Endothelial cell of umbilical vein (primary cell): ENCODE measurements at regions of chr10 and their contacts with region 1.

Region 1: DNA sequence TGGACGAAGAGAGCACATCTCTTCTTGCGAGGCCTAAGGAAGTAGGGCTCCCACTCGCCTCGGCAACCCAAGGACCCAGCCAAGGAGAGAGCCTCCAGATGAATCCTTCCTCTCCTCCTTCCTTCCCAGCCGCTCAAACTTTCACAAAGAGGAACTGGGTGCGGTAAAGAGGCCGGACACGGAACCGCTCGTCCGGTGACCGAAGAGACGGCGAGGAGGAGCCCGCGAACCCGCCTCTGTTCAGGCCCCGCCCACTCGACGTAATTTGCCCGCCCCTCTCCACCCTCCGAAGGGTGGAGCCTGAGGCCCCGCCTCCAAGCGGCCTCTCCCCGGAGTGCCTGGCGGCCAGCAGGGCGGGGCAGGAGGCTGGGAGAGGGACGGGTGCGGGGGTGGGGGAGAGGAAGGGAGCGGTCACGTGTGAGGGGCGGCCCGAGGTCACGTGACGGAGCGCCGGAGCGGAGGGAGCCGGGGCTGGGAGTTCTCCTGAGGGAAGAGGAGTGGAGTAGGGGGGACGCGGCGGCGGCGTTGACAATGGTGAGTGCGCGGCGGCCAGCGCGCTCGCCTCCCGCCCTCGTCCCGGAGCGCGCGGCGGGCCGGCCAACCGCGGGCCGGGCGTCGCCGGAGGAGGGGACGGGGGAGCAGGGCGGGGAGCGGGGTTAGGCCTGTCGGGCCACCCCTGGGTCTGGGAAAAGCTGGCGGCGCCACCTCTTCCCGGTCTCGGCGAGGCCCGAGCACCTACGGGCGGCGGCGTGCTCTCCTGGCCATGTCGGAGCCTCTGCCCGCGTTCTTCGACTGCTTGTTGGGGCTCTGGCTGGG is at the start of gene VPS26A:
- DNase-seq: peak; percentile 99
- H3K4me3 ChIP-seq: peak within 1 kb of the TSS; percentile 50 to 82 (median 81)
- H3K27ac ChIP-seq: peak within 1 kb of the TSS; percentile 79
- H3K4me1 ChIP-seq: peaks cover 16% of the 10 kb centered on the region
- H3K27me3 ChIP-seq: no peaks in the 10 kb centered on the region
- CTCF ChIP-seq: peak; percentile 35 to 47
- POLR2A ChIP-seq: peak; percentile 83
- total RNA-seq, gene VPS26A: 55.8 and 60.3 TPM in 2 replicates

Region 2: GRCh38 chr10:68924593-68924992 is 199.4 kb before region 1 on chr10:
- CTCF ChIA-PET with region 1: no interaction called
- POLR2A ChIA-PET with region 1: no interaction called
- dilution Hi-C with region 1: no loop called
- intact Hi-C with region 1: no loop called
- DNase-seq: peak; percentile 31
- H3K4me3 ChIP-seq: no peak overlapping the region
- H3K27ac ChIP-seq: no peak overlapping the region
- H3K4me1 ChIP-seq: no peaks in the 10 kb centered on the region
- H3K27me3 ChIP-seq: no peaks in the 10 kb centered on the region
- CTCF ChIP-seq: no peak
- POLR2A ChIP-seq: no peak

Region 3: GRCh38 chr10:68988530-68989316 is 135.2 kb before region 1 on chr10 and contains the start of gene KIFBP:
- CTCF ChIA-PET with region 1: interaction called, 3 read pairs
- POLR2A ChIA-PET with region 1: no interaction called
- dilution Hi-C with region 1: no loop called
- intact Hi-C with region 1: loop called (anchors 1 kb)
- DNase-seq: peak; percentile 99
- H3K4me3 ChIP-seq: peak within 1 kb of the TSS; percentile 71 to 84 (median 84)
- H3K27ac ChIP-seq: peak within 1 kb of the TSS; percentile 20
- H3K4me1 ChIP-seq: peaks cover 25% of the 10 kb centered on the region
- H3K27me3 ChIP-seq: no peaks in the 10 kb centered on the region
- CTCF ChIP-seq: peak; percentile 44 to 61
- POLR2A ChIP-seq: peak; percentile 90
- total RNA-seq, gene KIFBP: 37.3 and 39.8 TPM in 2 replicates

Region 4: DNA sequence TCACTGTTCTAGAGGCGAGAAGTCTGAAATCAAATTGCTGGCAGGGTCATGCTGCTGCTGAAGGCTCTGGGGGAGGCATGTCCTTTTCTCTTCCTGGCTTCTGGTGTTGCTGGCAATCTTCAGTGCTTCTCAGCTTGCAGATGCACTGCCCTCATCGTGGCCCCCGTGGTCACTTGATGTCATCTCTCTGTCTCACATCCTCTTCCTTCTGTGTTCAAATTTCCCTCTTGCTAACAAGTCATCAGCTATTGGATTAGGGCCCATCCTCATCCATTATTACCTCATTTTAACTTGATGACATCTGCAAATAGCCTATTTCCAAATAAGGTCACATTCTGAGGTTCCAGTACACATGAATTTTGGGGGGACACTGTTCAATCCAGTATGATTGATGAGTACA is 72.7 kb before region 1 on chr10:
- CTCF ChIA-PET with region 1: no interaction called
- POLR2A ChIA-PET with region 1: no interaction called
- dilution Hi-C with region 1: no loop called
- intact Hi-C with region 1: no loop called
- DNase-seq: peak; percentile 39
- H3K4me3 ChIP-seq: no peak overlapping the region
- H3K27ac ChIP-seq: no peak overlapping the region
- H3K4me1 ChIP-seq: peaks cover 16% of the 10 kb centered on the region
- H3K27me3 ChIP-seq: no peaks in the 10 kb centered on the region
- CTCF ChIP-seq: no peak
- POLR2A ChIP-seq: no peak

Region 5: DNA sequence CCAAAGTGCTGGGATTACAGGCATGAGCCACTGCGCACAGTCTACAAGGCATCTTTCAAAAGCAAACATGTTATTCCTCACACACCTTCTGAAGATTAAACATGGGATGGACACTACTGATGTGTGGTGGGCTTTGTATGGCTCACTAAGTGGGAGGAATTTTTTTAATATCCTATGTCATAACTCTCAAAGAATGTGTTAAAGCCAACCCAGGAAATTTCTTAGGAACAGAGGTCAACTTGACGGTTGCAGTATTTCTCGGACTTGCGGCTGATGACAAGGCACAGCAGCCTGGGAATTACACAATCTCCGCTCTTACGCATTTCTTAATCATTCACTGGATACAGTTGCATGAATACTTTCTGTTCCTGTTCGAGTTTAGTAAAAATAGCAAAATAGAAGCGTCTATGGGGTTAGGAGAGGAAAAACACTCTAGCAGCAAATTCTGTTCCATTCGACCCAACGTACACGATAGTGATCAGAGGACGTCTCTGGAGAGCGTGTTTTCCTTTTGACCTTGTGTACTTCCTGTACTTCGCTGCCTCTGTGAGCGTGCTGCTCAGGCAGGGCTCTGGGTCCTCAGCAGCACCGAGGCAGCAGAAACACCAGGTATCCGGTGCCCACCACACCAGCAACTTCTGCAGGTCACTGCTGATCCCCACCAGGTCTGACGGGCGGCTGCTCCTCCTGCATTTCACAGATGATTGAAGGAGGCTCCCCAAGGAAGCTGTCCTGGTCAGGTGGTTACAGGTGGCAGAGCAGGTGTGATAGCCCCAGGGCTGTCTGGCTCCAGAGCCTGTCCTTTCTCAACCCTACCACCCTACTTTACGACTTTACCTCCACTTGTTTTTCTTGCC is 62.4 kb before region 1 on chr10:
- CTCF ChIA-PET with region 1: no interaction called
- POLR2A ChIA-PET with region 1: no interaction called
- dilution Hi-C with region 1: no loop called
- intact Hi-C with region 1: loop called (anchors 1 kb)
- DNase-seq: peak; percentile 96
- H3K4me3 ChIP-seq: peak overlapping the region in 2 of 3 experiments; percentile 16 to 45
- H3K27ac ChIP-seq: peak overlapping the region; percentile 91
- H3K4me1 ChIP-seq: peaks cover 58% of the 10 kb centered on the region
- H3K27me3 ChIP-seq: no peaks in the 10 kb centered on the region
- CTCF ChIP-seq: no peak
- POLR2A ChIP-seq: peak; percentile 55

Region 6: DNA sequence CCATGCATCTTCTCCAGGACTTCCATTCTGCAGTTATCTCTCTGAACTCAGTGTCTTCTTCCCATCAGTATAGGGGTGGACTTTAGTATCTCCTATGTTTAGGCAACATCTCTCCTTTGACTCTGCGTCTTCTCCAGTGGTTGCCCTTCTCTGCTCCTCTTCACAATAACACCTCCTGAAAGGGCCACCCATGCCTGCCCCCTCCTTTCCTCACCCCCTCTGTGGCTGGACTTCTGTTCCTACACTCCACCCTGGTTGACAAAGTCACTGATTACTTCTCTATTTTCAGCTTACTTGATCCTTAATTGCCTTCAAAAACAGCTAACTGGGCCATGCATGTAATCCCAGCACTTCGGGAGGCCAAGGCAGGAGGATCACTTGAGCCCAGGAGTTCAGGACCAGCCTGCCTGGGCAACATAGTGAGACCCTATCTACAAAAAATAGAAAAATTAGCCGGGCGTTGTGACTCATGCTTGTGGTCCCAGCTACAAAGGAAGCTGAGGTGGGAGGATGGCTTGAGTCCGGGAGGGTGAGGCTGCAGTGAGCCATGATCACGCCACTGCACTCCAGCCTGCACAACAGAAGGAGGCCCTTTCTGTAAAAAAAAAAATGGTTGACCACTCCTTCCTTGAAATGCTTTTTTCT is 22.4 kb before region 1 on chr10:
- CTCF ChIA-PET with region 1: interaction called, 5 read pairs
- POLR2A ChIA-PET with region 1: interaction called, 3 read pairs
- dilution Hi-C with region 1: no loop called
- intact Hi-C with region 1: loop called (anchors 2 kb)
- DNase-seq: peak; percentile 46
- H3K4me3 ChIP-seq: no peak overlapping the region
- H3K27ac ChIP-seq: peak overlapping the region; percentile 82
- H3K4me1 ChIP-seq: peaks cover 17% of the 10 kb centered on the region
- H3K27me3 ChIP-seq: no peaks in the 10 kb centered on the region
- CTCF ChIP-seq: no peak
- POLR2A ChIP-seq: no peak

Region 7: GRCh38 chr10:69222157-69223027 is 98.4 kb after region 1 on chr10:
- CTCF ChIA-PET with region 1: no interaction called
- POLR2A ChIA-PET with region 1: no interaction called
- dilution Hi-C with region 1: no loop called
- intact Hi-C with region 1: loop called (anchors 2 kb)
- DNase-seq: peak; percentile 73
- H3K4me3 ChIP-seq: no peak overlapping the region
- H3K27ac ChIP-seq: peak overlapping the region; percentile 3
- H3K4me1 ChIP-seq: peaks cover 22% of the 10 kb centered on the region
- H3K27me3 ChIP-seq: no peaks in the 10 kb centered on the region
- CTCF ChIP-seq: peak; percentile 60 to 69
- POLR2A ChIP-seq: no peak

Region 8: DNA sequence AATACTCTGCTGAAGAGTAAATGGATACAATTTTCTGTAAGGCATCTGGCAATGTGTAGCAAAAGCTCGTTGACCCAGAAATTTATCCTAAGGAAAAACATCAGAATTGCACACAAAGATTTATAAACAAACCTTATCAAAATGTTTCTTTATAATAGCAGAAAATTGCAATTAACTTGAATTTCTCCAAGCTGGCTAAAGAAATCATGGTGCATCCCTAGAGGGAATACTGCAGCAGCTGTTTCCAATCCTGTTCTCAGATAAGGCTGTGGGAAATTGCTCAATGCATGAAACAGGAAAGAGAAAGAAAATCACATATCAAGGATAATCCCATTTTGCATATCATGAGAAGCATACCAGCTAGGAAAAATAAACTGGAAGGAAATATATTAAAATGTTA is 274.0 kb after region 1 on chr10:
- CTCF ChIA-PET with region 1: no interaction called
- POLR2A ChIA-PET with region 1: no interaction called
- dilution Hi-C with region 1: no loop called
- intact Hi-C with region 1: no loop called
- DNase-seq: no peak
- H3K4me3 ChIP-seq: no peak overlapping the region
- H3K27ac ChIP-seq: no peak overlapping the region
- H3K4me1 ChIP-seq: no peaks in the 10 kb centered on the region
- H3K27me3 ChIP-seq: no peaks in the 10 kb centered on the region
- CTCF ChIP-seq: no peak
- POLR2A ChIP-seq: no peak